Tibial artery (tissue), 4 donors: ENCODE measurements at regions of chr1 and their contacts with region 1.

Region 1: DNA sequence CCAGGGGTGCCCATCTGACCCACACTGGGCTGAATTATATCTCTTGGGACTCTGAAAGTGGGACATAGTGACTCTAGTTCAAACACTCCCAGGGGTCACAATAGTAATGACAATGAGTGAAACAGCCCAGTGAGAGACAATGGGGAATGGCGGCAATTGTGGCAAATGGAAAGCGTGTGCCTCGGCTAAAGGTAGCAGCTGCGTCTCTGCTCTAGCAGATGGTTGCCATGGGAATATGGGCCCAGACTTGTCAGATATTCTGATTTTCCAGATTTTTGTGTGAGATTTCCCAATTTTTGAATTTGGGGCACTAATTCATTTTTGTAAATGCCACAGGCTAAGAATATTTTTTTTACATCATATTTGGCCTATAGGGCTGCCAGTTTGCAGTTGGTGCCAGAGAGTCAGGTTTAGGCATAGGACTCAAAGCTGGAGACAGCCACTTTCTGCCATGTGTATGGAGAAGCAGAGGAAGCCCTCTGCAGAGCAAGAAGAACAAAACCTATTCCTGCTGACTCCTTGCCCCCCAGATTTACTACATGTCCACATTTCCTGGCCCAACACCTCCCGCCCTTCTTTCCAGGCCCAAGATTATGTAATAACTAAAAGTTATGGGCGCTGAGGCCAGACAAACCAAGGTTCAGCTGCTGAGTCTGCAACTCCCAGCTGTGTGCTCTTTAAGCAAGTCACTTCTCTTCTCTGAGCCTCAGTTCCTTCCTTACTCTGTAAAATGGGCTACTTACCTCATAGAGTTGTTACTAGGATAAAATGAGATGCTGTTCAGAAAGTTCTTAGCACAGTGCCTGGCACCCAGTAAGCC is 21.6 kb upstream of the PTP4A2 start:
- DNase-seq: peak in 1 of 2 donors; percentile 52
- H3K4me3 ChIP-seq: no peak overlapping the region
- H3K27ac ChIP-seq: no peak overlapping the region
- H3K4me1 ChIP-seq: peaks cover 10 to 23% (median 15%) of the 10 kb centered on the region in 4 donors
- H3K27me3 ChIP-seq: no peaks in the 10 kb centered on the region
- CTCF ChIP-seq: no peak

Region 2: DNA sequence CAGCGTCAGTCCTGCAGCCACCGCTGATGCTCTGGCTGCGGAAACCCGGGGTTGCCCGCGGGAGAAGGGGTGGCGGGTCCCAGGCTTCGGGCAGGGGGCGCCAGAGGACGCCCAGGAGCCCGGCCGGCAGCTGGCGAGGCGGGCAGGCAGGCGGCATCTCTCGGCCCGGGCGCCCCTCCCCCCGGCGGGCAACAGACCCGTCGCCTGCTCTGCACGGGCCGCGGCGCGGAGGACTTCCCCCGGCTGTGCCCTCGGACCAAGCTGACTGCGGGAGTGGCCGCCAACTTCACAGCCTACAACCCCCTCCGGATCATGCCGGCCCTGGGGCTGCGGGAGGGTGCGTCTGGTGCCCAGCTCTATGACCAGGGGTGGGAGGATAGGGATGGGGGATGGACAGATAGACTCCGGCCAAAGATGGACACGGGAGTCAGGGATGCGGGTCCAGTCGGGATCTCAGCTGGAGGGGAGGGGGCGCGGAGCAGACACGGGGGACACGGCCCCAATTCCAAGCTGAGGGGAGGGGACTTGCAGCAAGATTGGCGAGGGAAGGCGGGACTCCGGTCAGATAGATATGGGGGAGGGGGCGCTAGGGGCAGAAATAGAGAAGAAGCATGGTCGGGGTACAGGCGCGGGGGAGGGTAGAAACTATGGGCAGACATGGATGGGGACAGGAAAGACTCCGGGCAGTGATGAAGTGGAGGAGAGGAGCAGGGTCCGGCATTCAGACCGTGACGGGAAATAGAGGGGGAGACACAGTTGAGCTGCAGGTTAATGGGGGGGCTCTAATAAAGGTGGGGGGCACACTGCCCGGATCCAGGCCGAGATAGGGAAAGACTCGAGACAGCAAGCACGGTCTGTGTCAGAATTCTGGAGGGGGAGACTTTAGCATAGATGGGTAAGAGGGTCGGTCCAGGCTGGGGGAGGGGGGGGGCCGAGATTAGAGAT is 196.7 kb before region 1 on chr1:
- intact Hi-C with region 1: loop called (anchors 10 kb)
- DNase-seq: peak; percentile 31 to 77
- H3K4me3 ChIP-seq: peak overlapping the region; percentile 46 to 70
- H3K27ac ChIP-seq: no peak overlapping the region
- H3K4me1 ChIP-seq: peaks cover 0 to 44% (median 39%) of the 10 kb centered on the region in 4 donors
- H3K27me3 ChIP-seq: peaks cover 0 to 28% of the 10 kb centered on the region in 2 donors
- CTCF ChIP-seq: peak; percentile 54 to 68

Region 3: GRCh38 chr1:31789259-31790065 is 170.3 kb before region 1 on chr1:
- intact Hi-C with region 1: loop called (anchors 10 kb)
- DNase-seq: peak; percentile 96 to 97
- H3K4me3 ChIP-seq: peak overlapping the region; percentile 52 to 72
- H3K27ac ChIP-seq: peak overlapping the region; percentile 72 to 78
- H3K4me1 ChIP-seq: peaks cover 0 to 13% (median 6%) of the 10 kb centered on the region in 4 donors
- H3K27me3 ChIP-seq: peaks cover 0 to 11% of the 10 kb centered on the region in 2 donors
- CTCF ChIP-seq: peak; percentile 90 to 91

Region 4: DNA sequence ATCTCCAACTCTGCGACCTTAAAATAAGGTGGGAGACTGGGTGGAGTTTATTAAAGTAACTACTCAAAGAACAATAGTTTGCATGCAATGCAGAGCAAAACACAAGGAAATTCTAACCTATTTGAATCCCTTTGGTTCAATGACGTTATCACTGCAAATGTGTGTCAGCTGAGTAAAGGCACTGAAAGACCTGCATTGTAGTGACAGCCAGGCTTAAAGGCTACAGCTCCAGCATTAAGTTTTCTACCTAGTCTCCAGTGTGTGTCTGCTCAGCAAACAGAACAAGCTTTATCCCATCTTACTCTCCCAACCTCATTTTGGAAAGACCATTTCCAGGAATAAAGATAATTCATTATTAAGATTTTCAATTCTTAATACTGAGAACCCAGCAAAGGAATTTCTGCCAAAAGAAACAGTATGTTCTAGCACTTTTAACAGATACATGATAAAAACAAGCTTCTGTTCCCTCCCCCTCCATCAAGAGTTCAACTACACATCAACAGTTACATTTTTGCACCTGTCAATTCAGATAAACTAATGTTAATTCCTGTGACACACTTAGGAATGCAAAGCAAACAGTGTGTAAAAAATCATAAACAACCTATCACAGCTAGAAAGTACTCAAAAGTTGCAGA is 35.7 kb before region 1 on chr1:
- intact Hi-C with region 1: no loop called
- DNase-seq: no peak
- H3K4me3 ChIP-seq: no peak overlapping the region
- H3K27ac ChIP-seq: no peak overlapping the region
- H3K4me1 ChIP-seq: peaks cover 0 to 82% (median 56%) of the 10 kb centered on the region in 4 donors
- H3K27me3 ChIP-seq: no peaks in the 10 kb centered on the region
- CTCF ChIP-seq: no peak

Region 5: GRCh38 chr1:32063261-32063681 is 103.5 kb after region 1 on chr1:
- intact Hi-C with region 1: loop called (anchors 10 kb)
- DNase-seq: no peak
- H3K4me3 ChIP-seq: no peak overlapping the region
- H3K27ac ChIP-seq: peak overlapping the region; percentile 74 to 78
- H3K4me1 ChIP-seq: peaks cover 0 to 39% (median 30%) of the 10 kb centered on the region in 4 donors
- H3K27me3 ChIP-seq: no peaks in the 10 kb centered on the region
- CTCF ChIP-seq: peak; percentile 66 to 84

Region 6: GRCh38 chr1:32107742-32108661 is 148.3 kb after region 1 on chr1 and contains the start of gene KPNA6:
- intact Hi-C with region 1: no loop called
- DNase-seq: peak; percentile 88 to 95
- H3K4me3 ChIP-seq: peak within 1 kb of the TSS; percentile 79 to 86
- H3K27ac ChIP-seq: peak within 1 kb of the TSS; percentile 86 to 90
- H3K4me1 ChIP-seq: peaks cover 0 to 48% (median 35%) of the 10 kb centered on the region in 4 donors
- H3K27me3 ChIP-seq: no peaks in the 10 kb centered on the region
- CTCF ChIP-seq: no peak

Region 7: DNA sequence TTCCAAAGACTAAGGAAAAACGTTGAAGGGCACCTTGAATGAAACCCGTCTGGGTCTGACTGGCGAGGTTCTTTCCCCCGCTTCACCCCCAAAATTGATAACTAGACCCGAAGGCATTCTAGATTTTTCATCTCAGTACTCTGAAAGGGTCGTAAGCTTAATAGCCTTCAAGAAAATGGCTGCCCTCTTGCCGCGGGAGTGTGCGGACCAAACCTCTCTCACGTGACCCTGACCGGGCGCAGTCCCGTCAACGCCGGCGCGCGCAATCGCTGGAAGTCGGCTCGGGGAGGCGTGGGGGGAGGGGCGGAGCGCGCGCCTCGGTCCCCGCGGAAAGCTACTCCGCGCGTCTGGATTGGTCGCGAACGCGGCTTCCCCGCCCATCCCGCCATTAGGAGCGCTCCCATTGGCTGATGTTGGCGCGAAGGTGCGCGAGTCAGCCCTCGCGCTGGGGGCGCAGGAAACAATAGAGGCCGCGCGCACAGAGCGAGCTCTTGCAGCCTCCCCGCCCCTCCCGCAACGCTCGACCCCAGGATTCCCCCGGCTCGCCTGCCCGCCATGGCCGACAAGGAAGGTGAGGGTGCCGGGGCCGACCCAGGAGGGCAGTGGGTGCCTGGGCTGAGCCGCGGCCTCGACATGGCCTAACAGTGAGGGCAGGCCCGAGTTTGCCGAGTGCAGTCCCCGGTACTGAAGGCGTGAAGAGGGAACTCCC is 691.2 kb after region 1 on chr1 and contains the start of gene RBBP4:
- intact Hi-C with region 1: no loop called
- DNase-seq: peak; percentile 95 to 99
- H3K4me3 ChIP-seq: peak within 1 kb of the TSS; percentile 69 to 74
- H3K27ac ChIP-seq: peak within 1 kb of the TSS; percentile 91 to 95
- H3K4me1 ChIP-seq: peaks cover 0 to 61% (median 36%) of the 10 kb centered on the region in 4 donors
- H3K27me3 ChIP-seq: no peaks in the 10 kb centered on the region
- CTCF ChIP-seq: peak in 1 of 2 experiments; percentile 15